Lower leg skin (tissue), 4 donors: ENCODE measurements at regions of chr11 and their contacts with region 1.

Region 1: GRCh38 chr11:128172046-128172878 is 415.1 kb downstream of the ETS1 start:
- DNase-seq: peak; percentile 86 to 97
- H3K4me3 ChIP-seq: no peak overlapping the region
- CTCF ChIP-seq: no peak
- POLR2A ChIP-seq: no peak

Region 2: DNA sequence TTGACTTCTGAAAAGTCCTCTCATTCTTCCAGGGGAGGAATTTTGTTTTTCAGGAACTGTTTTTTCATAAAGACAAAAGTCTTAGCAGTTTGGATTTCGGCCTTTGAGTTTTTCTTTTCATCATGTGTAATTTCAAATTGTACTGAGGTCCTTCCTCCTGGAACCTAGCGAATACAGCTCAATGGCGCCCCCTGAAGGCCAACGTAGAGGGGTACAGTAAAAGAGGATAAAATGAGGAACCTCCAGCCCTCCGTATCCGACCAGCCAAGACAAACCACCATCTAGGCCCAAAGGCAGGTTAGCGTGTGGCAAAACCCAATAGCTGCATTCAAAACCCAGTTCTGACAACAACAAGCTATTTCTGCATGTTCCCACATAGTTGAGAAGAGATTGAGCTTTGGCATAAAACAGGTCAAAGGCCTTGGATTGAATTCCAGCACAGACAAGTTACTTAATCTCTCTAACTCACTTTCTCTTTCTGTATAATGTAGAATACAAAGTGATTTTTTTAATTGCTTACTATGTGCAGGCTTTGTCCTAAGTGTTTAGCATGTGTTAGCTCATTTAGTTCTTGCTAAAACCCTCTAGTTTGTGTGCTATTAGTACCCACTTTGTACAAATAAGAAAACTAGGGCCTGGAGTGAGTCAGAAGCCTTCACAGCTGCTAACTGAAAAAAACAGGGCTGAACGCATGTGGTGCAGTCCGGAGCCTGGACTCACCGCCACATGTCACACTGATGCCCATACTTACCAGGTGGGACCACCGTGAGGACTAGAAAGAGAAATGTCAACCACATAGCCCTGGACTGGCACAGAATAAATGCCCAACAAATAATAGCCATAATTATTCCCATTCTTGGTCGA is 458.3 kb after region 1 on chr11:
- intact Hi-C with region 1: loop called (anchors 5 kb)
- DNase-seq: peak; percentile 80 to 98
- H3K4me3 ChIP-seq: no peak overlapping the region
- CTCF ChIP-seq: peak in 1 of 3 donors; percentile 96
- POLR2A ChIP-seq: no peak

Region 3: GRCh38 chr11:128831174-128832120 is 659.2 kb after region 1 on chr11:
- intact Hi-C with region 1: loop called (anchors 5 kb)
- DNase-seq: peak; percentile 74 to 96
- H3K4me3 ChIP-seq: no peak overlapping the region
- CTCF ChIP-seq: no peak
- POLR2A ChIP-seq: no peak

Region 4: GRCh38 chr11:128956401-128957201 is 784.3 kb after region 1 on chr11:
- intact Hi-C with region 1: loop called (anchors 5 kb)
- DNase-seq: no peak
- H3K4me3 ChIP-seq: no peak overlapping the region
- CTCF ChIP-seq: peak in 1 of 3 donors; percentile 45
- POLR2A ChIP-seq: no peak

Region 5: DNA sequence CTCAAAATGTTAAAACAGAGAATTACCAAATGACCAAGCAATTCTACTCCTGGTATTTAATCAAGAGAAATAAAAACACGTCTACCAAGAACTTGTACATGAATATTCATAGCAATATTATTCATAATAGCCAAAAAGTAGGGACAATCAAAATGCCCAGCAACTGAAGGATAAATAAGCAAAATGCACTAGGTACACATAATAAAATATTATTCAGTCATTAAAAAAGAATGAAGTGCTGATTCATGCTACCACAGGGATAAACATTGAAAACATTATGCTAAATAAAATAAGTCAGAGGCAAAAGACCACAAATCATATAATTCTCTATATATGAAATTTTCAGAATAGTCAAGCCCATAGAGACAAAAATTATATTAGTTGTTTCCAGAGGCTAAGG is 995.1 kb after region 1 on chr11:
- intact Hi-C with region 1: no loop called
- DNase-seq: no peak
- H3K4me3 ChIP-seq: no peak overlapping the region
- CTCF ChIP-seq: no peak
- POLR2A ChIP-seq: no peak